Heart right ventricle (tissue), 16 donors: ENCODE measurements at regions of chr17 and their contacts with region 1.

Region 1: DNA sequence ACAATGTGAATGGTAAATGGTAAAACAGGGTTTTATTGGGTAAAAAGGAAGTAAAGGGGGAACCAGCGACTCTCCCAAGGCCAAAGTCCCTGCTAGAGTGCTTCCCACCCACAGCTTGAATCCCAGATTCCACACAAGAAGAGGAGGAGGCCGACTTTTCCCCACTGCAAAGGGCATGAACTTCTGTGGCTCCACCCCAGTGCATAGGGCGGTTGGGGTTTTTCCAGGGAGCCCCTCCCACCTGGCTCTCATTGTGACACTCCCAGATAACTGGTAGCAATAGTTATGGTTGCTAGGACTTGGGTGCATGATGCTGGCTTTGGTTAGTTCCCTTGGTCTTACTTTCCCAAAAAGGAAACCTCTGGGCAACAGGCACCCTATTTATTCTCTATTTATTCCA is 666.0 kb upstream of the CA10 start:
- DNase-seq: no peak
- ATAC-seq: no peak
- H3K4me3 ChIP-seq: no peak overlapping the region
- H3K27ac ChIP-seq: no peak overlapping the region
- H3K4me1 ChIP-seq: peaks cover 0 to 13% (median 0%) of the 10 kb centered on the region in 9 donors
- H3K27me3 ChIP-seq: no peaks in the 10 kb centered on the region
- CTCF ChIP-seq: no peak

Region 2: GRCh38 chr17:52546990-52547389 is 277.6 kb before region 1 on chr17:
- intact Hi-C with region 1: no loop called
- DNase-seq: no peak
- ATAC-seq: peak in 1 of 8 donors; percentile 29
- H3K4me3 ChIP-seq: no peak overlapping the region
- H3K27ac ChIP-seq: no peak overlapping the region
- H3K4me1 ChIP-seq: no peaks in the 10 kb centered on the region
- H3K27me3 ChIP-seq: no peaks in the 10 kb centered on the region
- CTCF ChIP-seq: no peak

Region 3: GRCh38 chr17:52762147-52762793 is 62.3 kb before region 1 on chr17:
- intact Hi-C with region 1: loop called in 1 of 10 experiments (anchors 5 kb)
- DNase-seq: peak; percentile 21 to 33
- ATAC-seq: peak; percentile 18 to 73 (median 50)
- H3K4me3 ChIP-seq: no peak overlapping the region
- H3K27ac ChIP-seq: peak overlapping the region in 1 of 10 donors; percentile 30
- H3K4me1 ChIP-seq: peaks cover 0 to 18% (median 0%) of the 10 kb centered on the region in 9 donors
- H3K27me3 ChIP-seq: no peaks in the 10 kb centered on the region
- CTCF ChIP-seq: no peak